ENCODE measurements at regions of chr17 and their contacts with region 1.

Region 1: DNA sequence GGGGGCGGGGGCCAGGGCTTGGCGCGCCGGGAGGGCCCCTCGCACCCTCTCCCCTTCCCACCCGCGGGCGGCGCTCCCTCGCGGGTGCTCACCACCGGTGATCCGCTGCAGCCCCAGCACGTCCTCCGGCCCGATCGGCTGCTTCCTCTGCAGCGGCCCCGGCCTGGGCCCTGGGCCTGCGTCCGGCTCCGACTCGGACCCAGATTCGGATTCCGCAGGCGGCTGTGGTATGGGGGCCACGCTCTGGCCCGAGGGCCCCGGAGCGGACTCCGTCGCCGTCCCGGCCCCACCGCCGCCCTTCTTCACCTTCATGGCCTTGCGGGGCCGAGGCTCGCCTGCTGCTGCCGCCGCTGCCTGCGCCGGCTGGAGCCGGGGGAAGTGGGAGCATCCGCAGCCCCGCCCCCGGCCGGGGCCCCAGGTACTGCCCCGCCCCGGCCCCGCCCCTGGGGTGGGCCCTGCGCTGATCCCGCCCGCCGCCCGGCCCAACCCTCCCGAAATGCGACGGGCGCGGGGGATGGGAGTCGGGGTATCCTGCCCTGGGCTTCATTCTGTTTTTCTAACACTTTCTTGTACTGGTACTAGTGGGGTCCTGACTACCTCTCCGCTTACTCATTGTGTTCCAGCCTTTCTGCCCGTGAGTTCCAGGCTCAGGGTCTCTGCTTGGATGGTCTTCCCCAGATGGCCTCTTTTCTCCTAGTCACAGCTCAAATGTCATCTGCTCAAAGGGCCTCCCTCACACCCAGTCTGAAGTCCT is at the start of gene UNC119:
- DNase-seq: no peak
- H3K4me3 ChIP-seq: peak within 1 kb of the TSS; percentile 55
- H3K27me3 ChIP-seq: no peaks in the 10 kb centered on the region
- CTCF ChIP-seq: no peak
- polyA plus RNA-seq, gene UNC119: 82.8 and 150 TPM in 2 replicates

Region 2: GRCh38 chr17:28571255-28572122 is 19.1 kb after region 1 on chr17 and contains the start of gene PIGS:
- CTCF ChIA-PET with region 1: interaction called, 10 read pairs
- POLR2A ChIA-PET with region 1: no interaction called
- DNase-seq: peak; percentile 62
- H3K4me3 ChIP-seq: peak within 1 kb of the TSS; percentile 90
- H3K27me3 ChIP-seq: no peaks in the 10 kb centered on the region
- CTCF ChIP-seq: no peak
- polyA plus RNA-seq, gene PIGS: 33.4 and 99.5 TPM in 2 replicates